CD4-positive, alpha-beta T cell (primary cell): ENCODE measurements at regions of chr14 and their contacts with region 1.

Region 1: DNA sequence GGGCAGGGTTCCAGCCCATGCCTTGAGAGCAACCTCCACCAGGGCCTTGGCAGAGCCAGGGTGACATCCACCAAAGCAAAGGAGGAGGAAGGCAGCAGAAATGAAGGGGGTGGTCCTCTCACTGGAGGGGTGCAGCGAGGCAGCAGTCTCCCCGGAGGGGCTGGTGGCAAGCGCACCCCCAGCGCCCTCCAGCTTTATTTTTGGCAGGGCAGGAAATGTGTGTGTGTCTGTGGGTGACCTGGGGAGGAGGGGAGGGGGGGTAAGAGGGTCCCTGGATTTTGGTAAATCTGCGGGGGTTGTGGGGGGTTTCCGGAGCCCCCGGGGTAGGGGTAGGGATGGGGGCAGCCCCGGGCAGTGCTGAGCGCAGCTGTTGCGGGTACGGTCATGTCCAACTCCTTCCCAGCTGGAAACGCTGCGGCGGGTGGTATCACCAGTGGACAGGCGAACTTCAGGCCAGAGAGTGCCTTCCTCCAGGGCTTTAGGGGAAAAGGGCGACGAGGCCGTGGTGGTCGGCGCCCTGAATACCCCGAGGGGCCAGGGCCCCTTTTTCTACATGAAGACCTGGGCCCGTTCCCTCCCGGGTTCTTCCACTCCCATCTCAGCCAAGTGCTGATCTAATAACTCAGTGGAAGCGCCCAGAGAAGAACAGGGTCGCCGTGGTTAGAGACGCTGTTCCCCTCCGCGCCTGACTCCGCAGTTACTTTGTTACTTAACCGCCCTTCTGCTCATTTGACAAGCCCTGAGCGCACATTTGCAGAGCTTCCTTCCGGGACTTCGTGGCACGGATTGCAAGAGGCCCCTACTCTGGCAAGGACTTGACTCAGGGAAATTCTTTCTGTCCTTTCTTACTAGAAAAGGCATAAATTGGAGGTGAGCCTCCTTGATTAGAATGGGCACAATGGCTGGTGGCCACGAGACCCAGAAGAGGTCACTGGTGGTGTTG is 55.2 kb downstream of the FOS start:
- DNase-seq: peak; percentile 47 to 82 (median 60)
- ATAC-seq: peak; percentile 94
- H3K4me3 ChIP-seq: peak overlapping the region; percentile 60
- H3K4me3 Mint-ChIP-seq: peak overlapping the region; percentile 79
- H3K27ac ChIP-seq: peak overlapping the region; percentile 66 to 83
- H3K27ac Mint-ChIP-seq: peak overlapping the region; percentile 93
- H3K4me1 ChIP-seq: peaks cover 28% of the 10 kb centered on the region
- H3K4me1 Mint-ChIP-seq: peaks cover 33% of the 10 kb centered on the region
- H3K27me3 ChIP-seq: no peaks in the 10 kb centered on the region
- H3K27me3 Mint-ChIP-seq: no peaks in the 10 kb centered on the region
- CTCF ChIP-seq: no peak

Region 2: DNA sequence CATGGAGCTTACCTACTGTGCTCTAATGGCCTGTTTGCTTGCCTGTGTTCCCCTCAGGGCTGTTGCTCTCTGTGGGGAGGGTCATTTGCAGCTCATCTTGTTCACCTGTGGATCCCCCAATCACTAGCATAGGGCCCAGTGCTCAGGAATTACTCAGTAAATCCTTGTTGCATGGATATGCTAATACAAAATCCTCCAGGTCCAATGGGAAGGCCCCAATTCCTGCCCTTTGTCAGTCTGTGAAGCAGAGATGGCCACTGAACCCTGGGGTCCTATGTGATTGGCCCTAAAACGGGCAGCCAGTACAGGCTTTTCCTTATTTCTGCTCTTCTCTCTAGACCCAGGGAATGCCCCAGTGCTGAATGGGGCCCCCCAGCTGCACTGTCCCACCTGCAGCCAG is 11.1 kb before region 1 on chr14:
- CTCF ChIA-PET with region 1: no interaction called
- POLR2A ChIA-PET with region 1: interaction called, 10 read pairs
- intact Hi-C with region 1: no loop called
- DNase-seq: no peak
- ATAC-seq: no peak
- H3K4me3 ChIP-seq: no peak overlapping the region
- H3K4me3 Mint-ChIP-seq: no peak overlapping the region
- H3K27ac ChIP-seq: no peak overlapping the region
- H3K27ac Mint-ChIP-seq: no peak overlapping the region
- H3K4me1 ChIP-seq: no peaks in the 10 kb centered on the region
- H3K4me1 Mint-ChIP-seq: no peaks in the 10 kb centered on the region
- H3K27me3 ChIP-seq: no peaks in the 10 kb centered on the region
- H3K27me3 Mint-ChIP-seq: no peaks in the 10 kb centered on the region
- CTCF ChIP-seq: no peak

Region 3: GRCh38 chr14:75427482-75428229 is 93.8 kb after region 1 on chr14 and contains the start of gene JDP2:
- CTCF ChIA-PET with region 1: no interaction called
- POLR2A ChIA-PET with region 1: interaction called, 3 read pairs
- intact Hi-C with region 1: loop called in 1 of 2 experiments (anchors 5 kb)
- DNase-seq: peak; percentile 12 to 69 (median 38)
- ATAC-seq: peak; percentile 74
- H3K4me3 ChIP-seq: peak within 1 kb of the TSS; percentile 50
- H3K4me3 Mint-ChIP-seq: peak within 1 kb of the TSS; percentile 88
- H3K27ac ChIP-seq: no peak within 1 kb of the TSS
- H3K27ac Mint-ChIP-seq: no peak within 1 kb of the TSS
- H3K4me1 ChIP-seq: peaks cover 18% of the 10 kb centered on the region
- H3K4me1 Mint-ChIP-seq: no peaks in the 10 kb centered on the region
- H3K27me3 ChIP-seq: peaks cover 10 to 19% of the 10 kb centered on the region in 2 experiments
- H3K27me3 Mint-ChIP-seq: peaks cover 33% of the 10 kb centered on the region
- CTCF ChIP-seq: no peak
- total RNA-seq, gene JDP2: 1.1 to 1.2 TPM